ENCODE measurements at regions of chr2 and their contacts with region 1.

Region 1: DNA sequence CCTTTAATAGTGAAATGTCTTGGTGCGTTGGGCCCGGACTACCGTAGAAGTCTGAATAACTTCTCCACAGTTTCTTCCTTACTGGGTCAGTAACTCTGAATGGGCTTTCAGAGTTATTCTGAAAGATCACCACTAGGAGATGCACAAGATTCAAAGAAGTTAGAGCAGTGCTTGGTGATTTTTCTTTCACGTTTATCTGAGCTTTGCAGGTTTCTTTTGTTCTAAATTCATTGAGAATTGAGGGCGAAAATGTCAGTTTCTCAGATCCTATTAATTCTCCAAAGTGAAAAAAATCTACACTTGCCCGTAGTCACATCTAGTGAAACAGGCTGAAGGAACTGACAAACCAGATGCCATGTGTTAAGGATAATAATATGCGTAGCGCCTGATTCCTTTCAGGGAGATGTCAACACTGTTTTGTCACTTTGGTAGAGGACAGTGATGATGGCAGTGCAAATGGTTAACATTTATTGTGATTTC is 70.1 kb downstream of the QPCT start:
- DNase-seq: no peak
- ATAC-seq: peak; percentile 92

Region 2: DNA sequence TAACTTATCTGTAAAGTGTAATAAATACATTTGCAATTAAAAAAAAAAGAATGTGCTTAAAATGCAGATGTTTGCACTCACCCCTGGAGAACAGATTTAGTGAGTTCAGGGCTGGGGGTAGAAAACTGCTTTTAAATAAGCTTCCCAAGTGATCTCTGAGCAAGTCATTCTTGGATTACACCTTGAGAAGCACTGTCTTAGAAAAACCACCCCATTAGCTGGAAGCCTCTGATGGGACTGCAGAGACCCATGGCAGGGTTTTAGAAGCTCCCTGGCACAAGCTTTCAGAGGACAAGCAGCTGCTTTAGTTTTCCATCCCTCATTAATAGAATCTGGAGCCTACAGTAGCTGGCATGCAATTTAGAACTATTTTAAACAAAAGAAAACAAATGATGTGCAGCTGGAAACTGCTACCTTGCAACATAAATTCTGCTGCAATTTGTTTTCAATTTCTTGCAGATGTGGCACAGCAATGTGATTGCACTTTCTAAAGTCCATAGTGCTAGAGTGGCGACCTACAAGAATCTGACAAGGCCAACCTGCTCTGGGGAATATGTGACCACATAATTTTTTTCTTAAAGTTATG is 115.4 kb after region 1 on chr2:
- intact Hi-C with region 1: loop called (anchors 10 kb)
- DNase-seq: no peak
- ATAC-seq: no peak

Region 3: GRCh38 chr2:37653805-37654378 is 239.4 kb after region 1 on chr2:
- intact Hi-C with region 1: loop called (anchors 10 kb)
- DNase-seq: peak; percentile 82
- ATAC-seq: peak; percentile 80

Region 4: GRCh38 chr2:37832590-37833197 is 418.2 kb after region 1 on chr2:
- intact Hi-C with region 1: loop called (anchors 2 kb)
- DNase-seq: peak; percentile 89
- ATAC-seq: peak; percentile 86

Region 5: GRCh38 chr2:37877457-37878315 is 463.2 kb after region 1 on chr2:
- intact Hi-C with region 1: loop called (anchors 5 kb)
- DNase-seq: no peak
- ATAC-seq: peak; percentile 78

Measured in Right ventricle myocardium superior (tissue), 1 donor.